GM12878 (cell line): ENCODE measurements at regions of chr16 and their contacts with region 1.

Region 1: DNA sequence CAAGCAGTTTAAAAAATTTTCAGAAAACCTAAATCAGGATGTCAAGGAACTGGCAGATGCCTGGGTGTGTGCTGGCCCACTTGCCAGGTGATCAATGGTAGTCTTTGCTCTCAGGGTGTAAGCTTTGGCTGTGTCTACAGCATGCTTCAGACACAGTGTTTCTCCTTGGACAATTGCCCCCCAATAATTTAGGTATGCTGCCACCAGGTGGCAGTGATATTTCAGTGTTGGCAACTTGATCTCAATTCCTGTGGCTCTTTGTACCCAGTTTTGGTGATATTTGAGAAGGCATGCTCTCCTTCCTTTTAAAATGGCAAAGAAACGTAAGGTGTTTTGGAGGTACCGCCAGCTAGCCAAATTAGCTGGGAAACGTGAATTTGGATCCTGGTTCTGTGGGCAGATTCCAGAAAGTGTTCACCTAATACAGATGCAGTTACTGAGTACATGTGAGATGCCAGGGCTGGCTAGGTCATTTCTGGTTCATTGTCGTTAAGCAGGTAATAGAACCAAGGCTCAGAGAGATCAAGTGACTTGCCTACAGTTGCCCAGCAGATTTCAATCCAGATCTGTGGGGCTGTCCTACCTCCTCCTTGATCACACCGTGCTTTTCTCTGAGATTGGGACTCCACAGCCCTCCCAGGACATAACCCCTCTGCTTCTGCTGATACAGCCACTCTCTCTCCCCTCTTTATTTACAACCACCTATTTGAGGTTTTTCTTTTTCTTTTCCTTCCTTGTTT is 155.6 kb upstream of the PLCG2 start:
- DNase-seq: peak; percentile 37
- ATAC-seq: peak; percentile 76
- H3K4me3 ChIP-seq: no peak overlapping the region
- H3K27ac ChIP-seq: no peak overlapping the region
- H3K4me1 ChIP-seq: peaks cover 10% of the 10 kb centered on the region
- H3K27me3 ChIP-seq: no peaks in the 10 kb centered on the region
- CTCF ChIP-seq: peak; percentile 62 to 84 (median 68); a peak in 5 of 6 replicates
- EP300 ChIP-seq: no peak
- POLR2A ChIP-seq: no peak
- RAD21 ChIP-seq: peak; percentile 87

Region 2: DNA sequence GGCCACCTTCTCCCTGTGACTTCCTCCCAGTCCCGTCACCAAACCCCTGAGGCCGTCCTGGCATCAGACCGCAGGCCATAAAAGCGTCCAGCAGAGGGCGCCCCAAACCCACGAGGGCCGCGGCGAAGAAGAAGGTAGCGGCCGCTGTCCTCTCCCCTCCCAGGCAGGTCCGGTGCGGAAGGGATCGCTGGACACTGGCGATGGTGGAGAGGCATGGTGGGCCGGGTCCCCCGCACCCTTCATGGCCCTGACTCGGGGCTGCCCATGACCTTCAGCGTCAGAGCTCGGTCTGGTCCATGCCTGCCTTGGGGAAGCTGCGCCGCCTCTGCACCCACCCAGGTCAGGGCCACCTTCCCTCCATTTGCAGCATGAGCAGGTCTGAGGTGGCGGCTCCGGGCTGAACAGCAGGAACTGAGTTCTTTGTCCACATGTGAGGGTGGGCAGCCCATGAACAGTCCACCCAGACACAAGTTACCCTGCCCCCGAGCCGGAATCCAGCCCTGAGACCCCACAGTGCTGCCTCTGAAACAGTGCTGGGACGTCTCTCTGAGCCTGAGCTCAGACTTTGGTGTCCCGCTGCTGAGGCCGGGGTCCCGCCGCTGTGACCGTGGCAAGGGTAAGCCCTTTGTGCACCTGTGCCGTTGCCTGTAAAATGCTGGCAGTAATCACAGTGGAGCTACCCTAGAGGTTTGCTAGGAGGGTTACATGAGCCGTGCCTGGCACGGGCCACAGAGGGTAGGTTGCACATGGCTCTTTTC is 219.7 kb before region 1 on chr16:
- CTCF ChIA-PET with region 1: interaction called, 28 read pairs
- POLR2A ChIA-PET with region 1: interaction called, 7 read pairs
- RAD21 ChIA-PET with region 1: interaction called, 16 read pairs
- SMC1A ChIA-PET with region 1: interaction called, 10 read pairs
- in situ Hi-C with region 1: no loop called
- intact Hi-C with region 1: loop called (anchors 1 kb)
- DNase-seq: peak; percentile 28
- ATAC-seq: peak; percentile 100
- H3K4me3 ChIP-seq: no peak overlapping the region
- H3K27ac ChIP-seq: no peak overlapping the region
- H3K4me1 ChIP-seq: no peaks in the 10 kb centered on the region
- H3K27me3 ChIP-seq: no peaks in the 10 kb centered on the region; a peak in 1 of 4 replicates
- CTCF ChIP-seq: peak; percentile 87 to 96 (median 88)
- EP300 ChIP-seq: no peak
- POLR2A ChIP-seq: no peak
- RAD21 ChIP-seq: peak; percentile 99

Region 3: DNA sequence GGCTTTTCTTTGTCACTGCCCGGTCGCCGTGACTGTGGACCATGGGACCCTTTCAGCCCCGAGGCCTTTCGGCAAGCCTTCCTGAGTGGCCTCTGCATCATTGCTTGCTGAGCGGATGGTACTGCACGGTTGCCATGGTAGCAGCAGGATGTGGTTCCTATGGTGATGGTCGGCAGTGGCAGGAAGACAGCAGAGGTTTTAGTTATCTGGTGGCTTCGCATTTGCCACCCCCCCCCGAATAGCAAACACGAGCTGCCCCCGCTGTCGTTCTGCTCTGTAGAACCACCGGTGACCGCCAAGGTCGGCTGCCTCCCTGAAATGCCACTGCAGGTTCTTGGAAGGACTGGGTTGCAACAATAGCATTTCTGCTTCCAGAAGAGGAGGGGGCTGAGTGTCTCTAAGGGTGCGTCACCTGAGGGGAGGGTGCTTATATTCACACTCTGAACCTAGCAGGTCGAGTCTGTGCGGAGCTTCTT is 102.3 kb before region 1 on chr16:
- CTCF ChIA-PET with region 1: no interaction called
- POLR2A ChIA-PET with region 1: no interaction called
- RAD21 ChIA-PET with region 1: no interaction called
- SMC1A ChIA-PET with region 1: no interaction called
- in situ Hi-C with region 1: no loop called
- intact Hi-C with region 1: no loop called
- DNase-seq: no peak
- ATAC-seq: peak; percentile 49
- H3K4me3 ChIP-seq: no peak overlapping the region
- H3K27ac ChIP-seq: no peak overlapping the region
- H3K4me1 ChIP-seq: peaks cover 28% of the 10 kb centered on the region
- H3K27me3 ChIP-seq: no peaks in the 10 kb centered on the region
- CTCF ChIP-seq: no peak
- EP300 ChIP-seq: no peak
- POLR2A ChIP-seq: no peak
- RAD21 ChIP-seq: no peak

Region 4: GRCh38 chr16:81696961-81697615 is 73.6 kb after region 1 on chr16:
- CTCF ChIA-PET with region 1: interaction called, 13 read pairs
- POLR2A ChIA-PET with region 1: no interaction called
- RAD21 ChIA-PET with region 1: interaction called, 3 read pairs
- SMC1A ChIA-PET with region 1: no interaction called
- in situ Hi-C with region 1: no loop called
- intact Hi-C with region 1: loop called (anchors 1 kb)
- DNase-seq: no peak
- ATAC-seq: peak; percentile 87
- H3K4me3 ChIP-seq: no peak overlapping the region
- H3K27ac ChIP-seq: no peak overlapping the region
- H3K4me1 ChIP-seq: no peaks in the 10 kb centered on the region
- H3K27me3 ChIP-seq: no peaks in the 10 kb centered on the region
- CTCF ChIP-seq: peak; percentile 75 to 76 (median 75)
- EP300 ChIP-seq: no peak
- POLR2A ChIP-seq: no peak
- RAD21 ChIP-seq: peak; percentile 73

Region 5: GRCh38 chr16:81723098-81723723 is 99.7 kb after region 1 on chr16:
- CTCF ChIA-PET with region 1: interaction called, 57 read pairs
- POLR2A ChIA-PET with region 1: interaction called, 3 read pairs
- RAD21 ChIA-PET with region 1: interaction called, 27 read pairs
- SMC1A ChIA-PET with region 1: interaction called, 15 read pairs
- in situ Hi-C with region 1: loop called (anchors 5 kb)
- intact Hi-C with region 1: loop called (anchors 1 kb)
- DNase-seq: peak; percentile 62
- ATAC-seq: peak; percentile 97
- H3K4me3 ChIP-seq: no peak overlapping the region
- H3K27ac ChIP-seq: no peak overlapping the region
- H3K4me1 ChIP-seq: peaks cover 7% of the 10 kb centered on the region
- H3K27me3 ChIP-seq: no peaks in the 10 kb centered on the region
- CTCF ChIP-seq: peak; percentile 60 to 78 (median 69); a peak in 5 of 6 replicates
- EP300 ChIP-seq: no peak
- POLR2A ChIP-seq: no peak
- RAD21 ChIP-seq: peak; percentile 92